ENCODE measurements at regions of chr2 and their contacts with region 1.

Region 1: DNA sequence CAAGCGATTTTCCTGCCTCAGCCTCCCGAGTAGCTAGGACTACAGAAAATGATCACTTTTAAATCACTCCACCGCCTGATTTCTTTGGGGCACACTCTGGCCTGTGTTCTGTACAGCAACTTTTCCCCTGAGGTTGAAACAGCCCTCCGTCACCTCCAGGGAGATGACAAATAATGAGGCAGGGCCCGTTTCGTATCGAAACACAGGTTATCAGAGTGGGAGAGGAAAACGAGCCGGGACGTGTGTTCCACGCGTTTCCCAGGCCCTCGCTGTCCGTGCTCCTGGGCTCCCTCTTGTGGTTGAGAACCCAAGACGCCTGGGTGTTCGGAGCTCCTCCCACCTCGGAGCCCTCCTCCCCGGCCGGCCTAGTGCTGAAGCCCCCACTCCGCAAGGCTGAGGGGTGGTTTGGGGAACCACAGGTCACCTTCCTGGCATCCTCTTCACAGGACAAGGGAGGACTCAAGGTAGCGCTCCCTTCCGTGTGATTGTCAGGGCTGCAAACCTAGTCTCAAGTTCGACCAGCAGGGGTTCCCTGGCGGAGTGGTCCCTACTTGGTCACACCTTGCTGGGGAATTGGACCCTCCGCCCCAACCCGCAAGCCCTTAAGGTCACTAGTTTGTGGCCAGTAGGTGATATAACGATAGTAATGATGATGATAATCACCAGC is 12.8 kb downstream of the ATP6V1B1 start:
- DNase-seq: peak; percentile 88
- H3K4me3 ChIP-seq: peak overlapping the region in 3 of 4 donors; percentile 24 to 47 (median 36)
- H3K27ac ChIP-seq: no peak overlapping the region
- H3K4me1 ChIP-seq: peaks cover 0 to 11% (median 5%) of the 10 kb centered on the region in 4 donors
- H3K27me3 ChIP-seq: peaks cover 0 to 31% (median 0%) of the 10 kb centered on the region in 3 donors
- CTCF ChIP-seq: peak; percentile 49 to 82 (median 77)
- EP300 ChIP-seq: no peak
- POLR2A ChIP-seq: no peak

Region 2: DNA sequence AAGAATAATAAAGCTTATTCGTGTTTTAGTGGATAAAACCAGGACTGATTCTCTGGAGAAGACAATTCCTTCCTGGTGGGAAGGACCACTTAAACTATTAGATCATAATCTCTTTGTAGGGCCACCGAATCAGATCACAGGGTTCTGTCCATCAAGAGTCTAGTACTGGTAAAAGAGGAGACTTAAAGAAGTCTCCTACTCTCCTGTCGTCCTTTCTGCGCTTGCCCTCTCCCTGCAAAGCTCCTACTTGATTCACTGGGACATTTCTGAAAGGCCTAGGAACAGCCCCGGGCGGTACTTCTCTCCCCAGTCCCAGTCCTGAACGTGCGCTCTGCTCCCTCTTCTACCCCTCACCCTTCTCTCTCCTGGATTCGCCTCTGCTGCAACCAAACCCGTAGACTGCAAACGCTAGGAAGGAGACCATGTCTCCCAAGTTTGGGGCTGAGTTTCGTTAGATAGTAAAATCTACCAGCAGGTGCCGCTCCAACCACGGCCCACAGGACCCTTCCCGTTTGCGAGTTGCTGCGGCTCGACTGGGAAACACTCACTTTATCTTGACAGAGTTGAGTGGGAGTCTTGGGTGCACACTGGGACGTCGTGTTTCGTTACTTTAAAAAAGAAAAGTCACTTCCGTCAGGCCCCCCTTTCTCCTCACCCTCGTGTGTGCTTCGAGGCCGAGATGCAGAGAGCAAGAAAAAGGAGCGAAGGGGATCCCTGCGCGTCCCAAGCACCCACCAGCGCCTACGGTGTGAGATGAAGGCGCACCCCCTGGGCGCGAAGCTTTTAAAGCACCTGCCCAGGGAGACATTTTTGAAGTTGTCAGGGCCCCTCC is 158.9 kb before region 1 on chr2:
- intact Hi-C with region 1: loop called (anchors 5 kb)
- DNase-seq: peak; percentile 71
- H3K4me3 ChIP-seq: peak overlapping the region in 3 of 4 donors; percentile 20 to 36 (median 32)
- H3K27ac ChIP-seq: no peak overlapping the region
- H3K4me1 ChIP-seq: peaks cover 0 to 14% (median 14%) of the 10 kb centered on the region in 4 donors
- H3K27me3 ChIP-seq: peaks cover 13 to 59% (median 25%) of the 10 kb centered on the region in 3 donors
- CTCF ChIP-seq: peak in 3 of 4 experiments; percentile 6 to 26 (median 25)
- EP300 ChIP-seq: no peak
- POLR2A ChIP-seq: no peak

Region 3: GRCh38 chr2:70861777-70862625 is 86.5 kb before region 1 on chr2:
- intact Hi-C with region 1: loop called (anchors 2 kb)
- DNase-seq: peak; percentile 82
- H3K4me3 ChIP-seq: no peak overlapping the region
- H3K27ac ChIP-seq: no peak overlapping the region
- H3K4me1 ChIP-seq: peaks cover 0 to 6% (median 0%) of the 10 kb centered on the region in 4 donors
- H3K27me3 ChIP-seq: peaks cover 6 to 46% (median 15%) of the 10 kb centered on the region in 3 donors
- CTCF ChIP-seq: peak; percentile 30 to 95 (median 66)
- EP300 ChIP-seq: no peak
- POLR2A ChIP-seq: no peak

Region 4: DNA sequence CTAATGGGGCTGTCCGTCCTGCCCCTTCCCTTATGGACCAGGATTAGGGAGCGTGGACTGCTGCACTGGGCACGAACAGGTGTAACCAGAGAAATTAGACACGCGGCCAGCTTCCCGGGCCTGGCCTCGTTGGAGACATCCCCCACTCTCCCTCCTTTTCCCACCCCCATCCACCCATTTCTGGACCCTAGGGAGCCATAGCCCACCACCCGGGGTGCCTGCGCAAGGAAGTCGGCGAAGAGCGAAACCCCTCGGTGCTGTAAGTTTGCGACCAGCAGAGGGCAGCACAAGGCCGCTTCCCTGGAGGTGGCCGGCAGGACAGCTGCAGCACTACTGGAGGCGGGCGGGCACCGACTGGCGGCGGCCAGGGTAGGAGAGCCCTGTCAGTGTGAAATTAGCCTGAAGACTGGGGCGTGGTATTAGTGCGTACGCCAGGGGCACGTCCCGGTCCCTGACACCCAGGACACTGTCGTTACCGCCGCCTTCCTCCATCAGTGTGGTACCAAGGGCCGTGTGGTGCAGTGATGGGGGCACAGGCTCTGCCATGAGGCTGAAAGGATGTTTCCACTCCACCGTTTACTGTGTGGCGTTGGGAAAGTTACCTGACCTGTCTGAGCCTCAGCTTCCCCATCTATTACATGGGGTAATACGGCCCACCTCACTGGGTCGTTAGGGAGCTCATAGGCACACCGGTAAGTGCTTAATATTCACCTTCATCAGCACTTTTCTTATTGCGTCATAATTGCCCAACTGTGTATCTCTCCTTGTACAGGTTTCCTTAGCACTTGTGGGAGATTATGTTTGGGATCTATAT is 76.9 kb before region 1 on chr2:
- intact Hi-C with region 1: loop called (anchors 1 kb)
- DNase-seq: peak; percentile 88
- H3K4me3 ChIP-seq: peak overlapping the region in 1 of 4 donors; percentile 26
- H3K27ac ChIP-seq: no peak overlapping the region
- H3K4me1 ChIP-seq: peaks cover 0 to 10% (median 8%) of the 10 kb centered on the region in 4 donors
- H3K27me3 ChIP-seq: peaks cover 7 to 54% (median 15%) of the 10 kb centered on the region in 3 donors
- CTCF ChIP-seq: peak; percentile 70 to 85 (median 81)
- EP300 ChIP-seq: no peak
- POLR2A ChIP-seq: no peak

Measured in sigmoid colon (tissue), 7 donors.